ENCODE measurements at regions of chr2 and their contacts with region 1.

Region 1: GRCh38 chr2:3001615-3002560 is 375.7 kb downstream of the EIPR1 start:
- DNase-seq: no peak
- ATAC-seq: peak in 1 of 2 donors; percentile 63
- H3K4me3 ChIP-seq: no peak overlapping the region
- H3K27ac ChIP-seq: no peak overlapping the region
- H3K4me1 ChIP-seq: no peaks in the 10 kb centered on the region
- H3K27me3 ChIP-seq: no peaks in the 10 kb centered on the region

Region 2: GRCh38 chr2:3290655-3291054 is 288.8 kb after region 1 on chr2:
- intact Hi-C with region 1: no loop called
- DNase-seq: peak in 1 of 3 donors; percentile 18
- ATAC-seq: no peak
- H3K4me3 ChIP-seq: no peak overlapping the region
- H3K27ac ChIP-seq: no peak overlapping the region
- H3K4me1 ChIP-seq: no peaks in the 10 kb centered on the region
- H3K27me3 ChIP-seq: no peaks in the 10 kb centered on the region

Region 3: GRCh38 chr2:3303583-3304406 is 301.9 kb after region 1 on chr2:
- intact Hi-C with region 1: loop called in 2 of 4 experiments (anchors 10 kb)
- DNase-seq: peak; percentile 86 to 94 (median 93)
- ATAC-seq: peak; percentile 95 to 98
- H3K4me3 ChIP-seq: peak overlapping the region; percentile 20
- H3K27ac ChIP-seq: no peak overlapping the region
- H3K4me1 ChIP-seq: no peaks in the 10 kb centered on the region
- H3K27me3 ChIP-seq: no peaks in the 10 kb centered on the region